Mammary epithelial cell (primary cell): ENCODE measurements at regions of chr16 and their contacts with region 1.

Region 1: DNA sequence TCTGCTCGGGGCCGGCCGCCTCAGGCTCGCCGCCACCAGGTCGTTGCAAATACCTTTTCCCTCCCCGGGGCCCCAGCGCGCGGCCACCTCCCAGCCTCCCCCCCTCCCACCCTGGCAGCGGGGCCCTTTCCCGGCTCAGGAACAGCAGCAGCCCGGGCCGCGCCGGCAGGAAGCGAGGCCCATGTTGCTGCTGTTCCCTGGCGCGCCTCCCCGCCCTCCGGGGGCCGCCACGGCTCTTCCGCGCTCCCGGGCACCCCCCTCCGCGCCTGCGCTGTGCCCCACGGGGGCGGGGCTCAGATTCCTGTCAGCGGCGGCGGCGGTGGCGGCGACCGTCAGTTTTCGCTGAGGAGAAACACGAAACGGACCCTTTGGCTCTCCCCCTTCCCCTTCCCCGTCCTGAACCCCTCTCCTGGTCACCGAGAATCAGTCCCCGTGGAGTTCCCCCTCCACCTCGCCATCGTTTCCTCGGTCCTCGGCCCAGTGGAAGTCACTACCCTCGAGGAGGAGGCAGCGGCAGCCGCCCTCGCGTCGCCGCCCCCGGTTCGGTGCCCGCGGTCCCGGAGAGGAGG is at the start of gene NFAT5:
- DNase-seq: peak; percentile 85
- H3K4me3 ChIP-seq: peak within 1 kb of the TSS; percentile 90 to 100 (median 95)
- H3K27ac ChIP-seq: peak within 1 kb of the TSS; percentile 93
- H3K4me1 ChIP-seq: peaks cover 19% of the 10 kb centered on the region
- H3K27me3 ChIP-seq: no peaks in the 10 kb centered on the region
- CTCF ChIP-seq: peak in 1 of 2 donors; percentile 11
- total RNA-seq, gene NFAT5: 37.5 to 48.2 TPM

Region 2: DNA sequence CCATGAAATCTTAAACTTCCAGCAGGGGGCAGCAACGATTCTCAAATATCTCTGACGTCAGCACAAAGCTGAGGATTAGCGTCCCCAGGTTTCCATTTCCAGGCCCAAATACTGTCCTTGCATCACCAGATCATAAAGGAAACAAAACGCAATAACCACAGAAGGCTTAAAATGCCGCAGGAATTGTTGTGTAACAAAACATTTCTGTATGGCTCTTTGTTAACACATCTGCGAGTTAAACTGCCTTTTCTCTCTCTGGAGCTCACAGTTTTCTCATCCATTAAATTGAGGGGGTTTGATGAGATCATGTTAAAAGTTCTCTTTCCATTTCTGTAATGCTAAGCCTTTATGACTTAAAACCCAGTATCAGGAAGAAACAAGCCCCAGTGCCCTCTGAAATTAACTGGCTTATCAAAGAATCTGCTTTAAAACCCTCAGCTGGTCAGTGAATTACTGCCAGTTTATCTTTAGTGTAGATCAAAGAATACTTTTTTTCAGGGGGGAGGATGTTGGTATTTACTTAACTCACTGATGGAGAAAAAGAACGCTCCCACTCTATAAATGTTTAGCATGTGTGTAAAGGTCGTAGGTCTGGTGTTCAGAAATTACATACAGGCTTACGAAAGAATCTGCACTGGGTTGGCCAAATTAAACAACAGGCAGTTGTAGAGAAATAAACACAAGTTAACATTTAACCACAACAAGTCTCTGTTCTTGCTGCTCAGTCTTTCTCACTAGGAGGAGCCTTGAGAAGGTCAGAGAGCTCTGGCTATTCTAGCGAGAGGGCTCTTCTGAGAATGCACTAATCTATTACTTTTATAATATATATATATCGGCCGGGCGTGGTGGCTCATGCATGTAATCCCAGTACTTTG is 169.3 kb before region 1 on chr16:
- CTCF ChIA-PET with region 1: no interaction called
- dilution Hi-C with region 1: no loop called
- in situ Hi-C with region 1: no loop called
- intact Hi-C with region 1: loop called (anchors 1 kb)
- DNase-seq: peak; percentile 90
- H3K4me3 ChIP-seq: no peak overlapping the region
- H3K27ac ChIP-seq: peak overlapping the region; percentile 65
- H3K4me1 ChIP-seq: peaks cover 18% of the 10 kb centered on the region
- H3K27me3 ChIP-seq: no peaks in the 10 kb centered on the region
- CTCF ChIP-seq: peak; percentile 55 to 57

Region 3: DNA sequence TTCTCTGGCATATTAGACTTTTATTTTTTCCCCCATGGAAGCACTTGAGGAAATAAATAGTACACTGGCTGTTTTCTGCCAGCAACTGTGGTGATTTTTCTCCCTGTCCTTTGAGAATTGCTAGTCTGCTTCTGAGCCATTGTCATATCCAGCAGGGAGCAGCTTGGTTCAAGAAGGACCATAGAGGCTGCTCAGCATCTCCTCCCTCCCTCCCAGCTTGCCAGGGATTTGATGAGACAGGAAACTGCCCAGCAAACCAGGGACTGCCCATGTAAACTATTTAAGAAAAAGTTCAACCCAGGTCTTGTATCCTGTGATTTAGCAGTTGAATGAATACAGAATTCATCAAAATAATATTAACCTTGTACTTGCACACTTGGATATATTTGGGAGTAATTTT is 101.9 kb before region 1 on chr16:
- CTCF ChIA-PET with region 1: no interaction called
- dilution Hi-C with region 1: no loop called
- in situ Hi-C with region 1: no loop called
- intact Hi-C with region 1: loop called (anchors 1 kb)
- DNase-seq: no peak
- H3K4me3 ChIP-seq: no peak overlapping the region
- H3K27ac ChIP-seq: no peak overlapping the region
- H3K4me1 ChIP-seq: peaks cover 18% of the 10 kb centered on the region
- H3K27me3 ChIP-seq: no peaks in the 10 kb centered on the region
- CTCF ChIP-seq: no peak

Region 4: DNA sequence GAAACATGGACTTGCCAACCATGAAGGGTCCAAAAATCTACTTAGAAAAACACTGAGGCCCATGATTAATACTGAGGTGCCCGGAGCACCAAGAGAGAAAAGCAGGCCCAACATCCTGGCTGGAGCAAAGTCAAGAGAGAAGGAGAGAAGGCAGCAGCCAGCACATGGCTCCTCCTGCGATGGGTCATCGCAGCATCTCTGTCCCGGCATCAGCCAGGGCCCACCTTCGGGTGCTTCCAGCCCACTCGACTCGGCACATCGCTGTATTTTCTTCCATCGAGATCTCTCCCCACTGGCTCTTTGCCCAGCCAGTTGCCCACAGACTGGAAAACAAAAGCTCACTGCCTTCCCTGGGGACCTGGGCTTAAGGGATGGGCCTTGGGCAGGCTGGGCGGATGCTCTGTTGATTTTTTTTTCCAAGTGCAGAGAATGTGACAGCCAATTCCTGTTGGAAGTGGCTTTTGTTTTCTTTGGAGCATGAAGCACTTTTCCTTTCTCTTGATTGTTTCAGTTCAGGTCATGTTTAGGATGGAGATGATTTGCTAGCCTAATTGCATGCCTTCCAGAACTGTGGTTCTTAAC is 83.3 kb before region 1 on chr16:
- CTCF ChIA-PET with region 1: no interaction called
- dilution Hi-C with region 1: no loop called
- in situ Hi-C with region 1: no loop called
- intact Hi-C with region 1: loop called (anchors 1 kb)
- DNase-seq: no peak
- H3K4me3 ChIP-seq: no peak overlapping the region
- H3K27ac ChIP-seq: peak overlapping the region; percentile 25
- H3K4me1 ChIP-seq: peaks cover 30% of the 10 kb centered on the region
- H3K27me3 ChIP-seq: no peaks in the 10 kb centered on the region
- CTCF ChIP-seq: no peak

Region 5: DNA sequence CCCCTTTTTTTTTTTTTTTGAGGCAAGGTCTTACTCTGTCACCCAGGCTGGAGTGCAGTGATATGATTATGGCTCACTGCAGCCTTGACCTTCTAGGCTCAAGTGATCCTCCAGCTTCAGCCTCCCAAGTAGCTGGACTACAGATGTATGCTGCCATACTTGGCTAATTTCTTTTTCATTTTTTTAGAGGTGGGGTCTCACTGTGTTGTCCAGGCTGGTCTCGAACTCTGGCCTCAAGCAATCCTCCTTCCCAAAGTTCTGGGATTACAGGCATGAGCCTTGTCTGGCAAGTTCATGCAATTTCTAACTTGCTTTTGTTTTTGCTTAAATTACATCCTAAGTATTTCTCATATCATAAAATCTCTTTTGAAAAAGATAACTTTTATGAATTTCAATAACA is 33.8 kb before region 1 on chr16:
- CTCF ChIA-PET with region 1: no interaction called
- dilution Hi-C with region 1: no loop called
- in situ Hi-C with region 1: no loop called
- intact Hi-C with region 1: loop called (anchors 2 kb)
- DNase-seq: no peak
- H3K4me3 ChIP-seq: no peak overlapping the region
- H3K27ac ChIP-seq: no peak overlapping the region
- H3K4me1 ChIP-seq: peaks cover 40% of the 10 kb centered on the region
- H3K27me3 ChIP-seq: no peaks in the 10 kb centered on the region
- CTCF ChIP-seq: no peak

Region 6: GRCh38 chr16:69626256-69626655 is 60.5 kb after region 1 on chr16:
- CTCF ChIA-PET with region 1: no interaction called
- dilution Hi-C with region 1: no loop called
- in situ Hi-C with region 1: no loop called
- intact Hi-C with region 1: loop called (anchors 5 kb)
- DNase-seq: peak; percentile 16
- H3K4me3 ChIP-seq: no peak overlapping the region
- H3K27ac ChIP-seq: no peak overlapping the region
- H3K4me1 ChIP-seq: peaks cover 4% of the 10 kb centered on the region
- H3K27me3 ChIP-seq: no peaks in the 10 kb centered on the region
- CTCF ChIP-seq: no peak

Region 7: GRCh38 chr16:69812688-69813014 is 246.9 kb after region 1 on chr16:
- CTCF ChIA-PET with region 1: no interaction called
- dilution Hi-C with region 1: no loop called
- in situ Hi-C with region 1: no loop called
- intact Hi-C with region 1: no loop called
- DNase-seq: no peak
- H3K4me3 ChIP-seq: no peak overlapping the region
- H3K27ac ChIP-seq: no peak overlapping the region
- H3K4me1 ChIP-seq: no peaks in the 10 kb centered on the region
- H3K27me3 ChIP-seq: no peaks in the 10 kb centered on the region
- CTCF ChIP-seq: no peak